Caco-2 (cell line): ENCODE measurements at regions of chr3 and their contacts with region 1.

Region 1: GRCh38 chr3:101779047-101779821 is at the start of gene NXPE3:
- DNase-seq: peak; percentile 82 to 88
- H3K4me3 ChIP-seq: peak within 1 kb of the TSS; percentile 71
- H3K4me3 Mint-ChIP-seq: peak within 1 kb of the TSS; percentile 89
- H3K27ac Mint-ChIP-seq: peak within 1 kb of the TSS; percentile 44
- H3K4me1 ChIP-seq: peaks cover 4% of the 10 kb centered on the region; the same call in 1 of the 2 replicates
- H3K4me1 Mint-ChIP-seq: peaks cover 5% of the 10 kb centered on the region
- H3K27me3 ChIP-seq: no peaks in the 10 kb centered on the region
- H3K27me3 Mint-ChIP-seq: no peaks in the 10 kb centered on the region
- CTCF ChIP-seq: no peak
- total RNA-seq, gene NXPE3: 4.9 and 5.3 TPM in 2 replicates

Region 2: DNA sequence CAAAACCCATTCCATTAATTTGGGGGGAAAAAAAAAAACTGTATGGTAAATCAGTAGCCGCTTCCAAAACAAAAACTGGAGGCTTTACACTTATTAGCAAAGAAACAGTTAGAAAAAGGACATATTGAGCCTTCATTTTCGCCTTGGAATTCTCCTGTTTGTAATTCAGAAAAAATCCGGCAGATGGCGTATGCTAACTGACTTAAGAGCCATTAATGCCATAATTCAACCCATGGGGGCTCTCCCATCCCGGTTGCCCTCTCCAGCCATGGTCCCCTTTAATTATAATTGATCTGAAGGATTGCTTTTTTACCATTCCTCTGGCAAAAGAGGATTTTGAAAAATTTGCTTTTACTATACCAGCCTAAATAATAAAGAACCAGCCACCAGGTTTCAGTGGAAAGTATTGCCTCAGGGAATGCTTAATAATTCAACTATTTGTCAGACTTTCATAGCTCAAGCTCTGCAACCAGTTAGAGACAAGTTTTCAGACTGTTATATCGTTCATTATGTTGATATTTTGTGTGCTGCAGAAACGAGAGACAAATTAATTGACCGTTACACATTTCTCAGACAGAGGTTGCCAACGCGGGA is 83.4 kb before region 1 on chr3:
- CTCF ChIA-PET with region 1: no interaction called
- POLR2A ChIA-PET with region 1: no interaction called
- intact Hi-C with region 1: loop called (anchors 10 kb)
- DNase-seq: peak in 1 of 2 experiments; percentile 66
- H3K4me3 ChIP-seq: no peak overlapping the region
- H3K4me3 Mint-ChIP-seq: no peak overlapping the region
- H3K27ac Mint-ChIP-seq: no peak overlapping the region
- H3K4me1 ChIP-seq: peaks cover 10% of the 10 kb centered on the region; the same call in 1 of the 2 replicates
- H3K4me1 Mint-ChIP-seq: peaks cover 15% of the 10 kb centered on the region
- H3K27me3 ChIP-seq: no peaks in the 10 kb centered on the region
- H3K27me3 Mint-ChIP-seq: no peaks in the 10 kb centered on the region
- CTCF ChIP-seq: peak; percentile 47 to 80